Heart left ventricle (tissue), 16 donors: ENCODE measurements at regions of chr1 and their contacts with region 1.

Region 1: GRCh38 chr1:39317910-39318633 is 113.6 kb downstream of the MACF1 start:
- DNase-seq: peak in 2 of 5 donors; percentile 11 to 23
- ATAC-seq: peak in 3 of 4 donors; percentile 38 to 90 (median 58)
- H3K4me3 ChIP-seq: no peak overlapping the region
- H3K27ac ChIP-seq: peak overlapping the region in 5 of 12 donors; percentile 12 to 48 (median 29)
- H3K4me1 ChIP-seq: peaks cover 0 to 10% (median 0%) of the 10 kb centered on the region in 12 donors
- H3K27me3 ChIP-seq: no peaks in the 10 kb centered on the region
- CTCF ChIP-seq: no peak
- POLR2A ChIP-seq: no peak

Region 2: DNA sequence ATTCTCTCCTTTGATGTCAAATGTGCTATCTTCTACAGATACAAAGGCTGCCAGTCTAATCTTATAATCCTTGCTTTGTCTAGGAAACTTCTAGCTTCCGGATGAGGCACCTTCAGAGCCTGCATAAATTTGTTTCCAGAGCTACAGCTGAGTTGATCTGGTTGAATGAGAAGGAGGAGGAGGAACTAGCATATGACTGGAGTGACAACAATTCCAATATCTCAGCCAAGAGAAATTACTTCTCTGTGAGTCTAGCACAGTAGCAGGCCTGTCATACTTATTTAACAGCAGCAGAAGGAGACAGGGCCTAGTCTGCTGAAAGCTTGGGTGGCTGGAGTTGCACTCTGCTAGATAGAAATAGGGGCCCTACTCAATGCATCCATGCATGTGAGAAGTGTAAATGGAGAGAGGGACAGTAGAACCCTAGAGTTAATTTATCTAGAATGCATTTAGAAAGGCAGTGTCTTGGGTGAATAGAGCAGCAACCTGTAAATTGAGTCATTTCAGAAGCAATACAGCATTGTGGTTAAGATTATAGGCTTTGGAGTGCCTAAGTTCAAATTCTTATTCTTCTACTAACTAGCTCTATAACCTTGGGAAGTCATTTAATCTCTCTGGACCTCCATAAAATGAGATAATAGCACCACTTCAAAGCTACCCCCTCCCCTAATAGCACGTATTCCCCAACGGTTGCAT is 24.5 kb before region 1 on chr1:
- intact Hi-C with region 1: loop called in 1 of 10 experiments (anchors 5 kb)
- DNase-seq: no peak
- ATAC-seq: peak; percentile 32 to 73 (median 69)
- H3K4me3 ChIP-seq: no peak overlapping the region
- H3K27ac ChIP-seq: peak overlapping the region in 4 of 12 donors; percentile 16 to 36 (median 24)
- H3K4me1 ChIP-seq: peaks cover 0 to 25% (median 9%) of the 10 kb centered on the region in 12 donors
- H3K27me3 ChIP-seq: no peaks in the 10 kb centered on the region
- CTCF ChIP-seq: no peak
- POLR2A ChIP-seq: no peak

Region 3: DNA sequence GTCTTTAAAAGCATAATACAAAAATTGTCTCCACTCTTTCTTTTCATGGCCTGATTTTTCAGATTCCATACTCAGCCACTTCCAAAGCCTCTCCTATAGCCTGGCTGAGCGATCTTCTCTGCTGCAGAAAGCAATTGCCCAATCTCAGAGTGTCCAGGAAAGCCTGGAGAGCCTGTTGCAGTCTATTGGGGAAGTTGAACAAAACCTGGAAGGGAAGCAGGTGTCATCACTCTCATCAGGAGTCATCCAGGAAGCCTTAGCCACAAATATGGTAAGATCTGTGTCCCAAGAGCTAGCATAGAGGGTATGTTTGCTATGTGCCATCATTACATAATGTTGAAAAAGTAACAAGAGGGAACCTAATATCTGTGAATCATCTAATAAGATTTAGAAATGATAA is 42.7 kb after region 1 on chr1:
- intact Hi-C with region 1: loop called in 1 of 10 experiments (anchors 10 kb)
- DNase-seq: no peak
- ATAC-seq: no peak
- H3K4me3 ChIP-seq: no peak overlapping the region
- H3K27ac ChIP-seq: peak overlapping the region in 1 of 12 donors; percentile 36
- H3K4me1 ChIP-seq: peaks cover 0 to 18% (median 9%) of the 10 kb centered on the region in 12 donors
- H3K27me3 ChIP-seq: no peaks in the 10 kb centered on the region
- CTCF ChIP-seq: no peak
- POLR2A ChIP-seq: no peak

Region 4: DNA sequence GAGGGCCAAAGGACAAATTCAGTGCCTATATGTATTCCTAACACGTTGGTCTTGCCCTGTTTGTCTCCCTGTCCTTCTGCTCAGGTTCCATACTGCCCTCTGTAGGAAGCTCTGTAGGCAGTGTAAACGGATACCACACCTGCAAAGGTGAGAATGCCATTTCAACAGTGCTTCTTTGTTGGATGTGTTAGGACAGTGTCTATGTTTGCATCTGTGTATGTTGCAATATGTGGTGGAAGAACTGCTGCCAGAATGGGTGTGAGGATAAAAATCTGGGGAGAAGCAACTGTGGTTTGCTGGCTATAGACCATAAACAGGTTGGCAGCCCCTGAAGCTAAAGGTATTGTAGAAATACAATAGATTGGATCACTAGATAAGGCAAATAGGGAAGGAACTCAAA is 60.3 kb after region 1 on chr1:
- intact Hi-C with region 1: loop called in 1 of 10 experiments (anchors 10 kb)
- DNase-seq: no peak
- ATAC-seq: no peak
- H3K4me3 ChIP-seq: no peak overlapping the region
- H3K27ac ChIP-seq: no peak overlapping the region
- H3K4me1 ChIP-seq: peaks cover 0 to 7% (median 0%) of the 10 kb centered on the region in 12 donors
- H3K27me3 ChIP-seq: no peaks in the 10 kb centered on the region
- CTCF ChIP-seq: peak in 6 of 12 donors; percentile 8 to 30 (median 13)
- POLR2A ChIP-seq: no peak